H1 (cell line): ENCODE measurements at regions of chr1 and their contacts with region 1.

Region 1: GRCh38 chr1:152869808-152870419 is 8.2 kb upstream of the SMCP start:
- DNase-seq: peak in 1 of 2 experiments; percentile 80
- H3K4me3 ChIP-seq: no peak overlapping the region
- H3K27ac ChIP-seq: no peak overlapping the region
- H3K4me1 ChIP-seq: no peaks in the 10 kb centered on the region; a peak in 1 of 7 replicates
- H3K27me3 ChIP-seq: no peaks in the 10 kb centered on the region
- CTCF ChIP-seq: peak; percentile 78 to 86 (median 81)
- EP300 ChIP-seq: no peak
- POLR2A ChIP-seq: no peak
- RAD21 ChIP-seq: peak; percentile 71 to 74

Region 2: GRCh38 chr1:152836870-152837269 is 33.0 kb before region 1 on chr1:
- CTCF ChIA-PET with region 1: no interaction called
- POLR2A ChIA-PET with region 1: no interaction called
- DNase-seq: no peak
- H3K4me3 ChIP-seq: no peak overlapping the region
- H3K27ac ChIP-seq: no peak overlapping the region
- H3K4me1 ChIP-seq: no peaks in the 10 kb centered on the region
- H3K27me3 ChIP-seq: no peaks in the 10 kb centered on the region
- CTCF ChIP-seq: no peak
- EP300 ChIP-seq: no peak
- POLR2A ChIP-seq: no peak
- RAD21 ChIP-seq: no peak

Region 3: GRCh38 chr1:152906023-152906565 is 36.2 kb after region 1 on chr1:
- CTCF ChIA-PET with region 1: interaction called, 15 read pairs
- POLR2A ChIA-PET with region 1: no interaction called
- DNase-seq: no peak
- H3K4me3 ChIP-seq: no peak overlapping the region
- H3K27ac ChIP-seq: no peak overlapping the region
- H3K4me1 ChIP-seq: no peaks in the 10 kb centered on the region
- H3K27me3 ChIP-seq: no peaks in the 10 kb centered on the region
- CTCF ChIP-seq: no peak
- EP300 ChIP-seq: no peak
- POLR2A ChIP-seq: no peak
- RAD21 ChIP-seq: no peak

Region 4: GRCh38 chr1:152926091-152926490 is 56.2 kb after region 1 on chr1:
- CTCF ChIA-PET with region 1: interaction called, 11 read pairs
- POLR2A ChIA-PET with region 1: no interaction called
- DNase-seq: no peak
- H3K4me3 ChIP-seq: no peak overlapping the region
- H3K27ac ChIP-seq: no peak overlapping the region
- H3K4me1 ChIP-seq: no peaks in the 10 kb centered on the region
- H3K27me3 ChIP-seq: no peaks in the 10 kb centered on the region
- CTCF ChIP-seq: peak; percentile 21 to 76 (median 60)
- EP300 ChIP-seq: no peak
- POLR2A ChIP-seq: no peak
- RAD21 ChIP-seq: peak; percentile 85 to 86

Region 5: GRCh38 chr1:152941021-152941711 is 71.3 kb after region 1 on chr1:
- CTCF ChIA-PET with region 1: no interaction called
- POLR2A ChIA-PET with region 1: no interaction called
- DNase-seq: no peak
- H3K4me3 ChIP-seq: no peak overlapping the region
- H3K27ac ChIP-seq: no peak overlapping the region
- H3K4me1 ChIP-seq: no peaks in the 10 kb centered on the region
- H3K27me3 ChIP-seq: no peaks in the 10 kb centered on the region
- CTCF ChIP-seq: peak in 1 of 3 experiments; percentile 44; a peak in 1 of 4 replicates
- EP300 ChIP-seq: no peak
- POLR2A ChIP-seq: no peak
- RAD21 ChIP-seq: peak in 1 of 2 experiments; percentile 24; a peak in 1 of 4 replicates

Region 6: DNA sequence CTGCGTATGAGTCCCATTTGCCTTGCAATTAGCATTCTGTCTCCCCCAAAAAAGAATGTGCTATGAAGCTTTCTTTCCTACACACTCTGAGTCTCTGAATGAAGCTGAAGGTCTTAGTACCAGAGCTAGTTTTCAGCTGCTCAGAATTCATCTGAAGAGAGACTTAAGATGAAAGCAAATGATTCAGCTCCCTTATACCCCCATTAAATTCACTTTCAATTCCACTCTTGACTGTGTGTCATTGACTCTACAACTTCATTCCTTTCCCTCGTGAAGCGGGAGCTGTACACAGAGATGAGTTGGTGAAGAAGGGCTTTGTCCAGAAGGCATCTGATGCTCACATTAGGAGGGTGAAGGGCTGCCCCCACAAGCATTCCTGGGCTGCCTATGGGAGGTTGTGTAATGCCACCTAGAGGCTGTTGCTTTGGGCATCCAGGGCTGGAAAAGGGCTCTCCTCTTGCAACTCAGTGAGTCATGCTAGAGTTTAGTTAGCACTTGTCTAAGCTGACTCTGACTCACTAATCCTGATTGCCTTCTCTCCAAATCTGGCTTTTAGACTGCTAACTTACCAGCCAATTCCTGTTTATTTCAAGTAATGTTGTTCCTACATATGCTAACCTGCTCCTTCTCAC is 162.9 kb after region 1 on chr1:
- CTCF ChIA-PET with region 1: interaction called, 16 read pairs
- POLR2A ChIA-PET with region 1: no interaction called
- DNase-seq: peak in 1 of 2 experiments; percentile 56
- H3K4me3 ChIP-seq: no peak overlapping the region
- H3K27ac ChIP-seq: no peak overlapping the region; the same call in 1 of the 2 replicates
- H3K4me1 ChIP-seq: no peaks in the 10 kb centered on the region
- H3K27me3 ChIP-seq: peaks cover 0 to 1% (median 0%) of the 10 kb centered on the region in 4 experiments; a peak in 1 of 7 replicates
- CTCF ChIP-seq: peak; percentile 53 to 67 (median 54)
- EP300 ChIP-seq: no peak
- POLR2A ChIP-seq: no peak
- RAD21 ChIP-seq: peak; percentile 61 to 66

Region 7: GRCh38 chr1:153220606-153221303 is 350.8 kb after region 1 on chr1:
- CTCF ChIA-PET with region 1: interaction called, 67 read pairs
- POLR2A ChIA-PET with region 1: no interaction called
- DNase-seq: no peak
- H3K4me3 ChIP-seq: no peak overlapping the region
- H3K27ac ChIP-seq: no peak overlapping the region
- H3K4me1 ChIP-seq: no peaks in the 10 kb centered on the region
- H3K27me3 ChIP-seq: no peaks in the 10 kb centered on the region; a peak in 2 of 7 replicates
- CTCF ChIP-seq: no peak
- EP300 ChIP-seq: no peak
- POLR2A ChIP-seq: no peak
- RAD21 ChIP-seq: no peak

Region 8: DNA sequence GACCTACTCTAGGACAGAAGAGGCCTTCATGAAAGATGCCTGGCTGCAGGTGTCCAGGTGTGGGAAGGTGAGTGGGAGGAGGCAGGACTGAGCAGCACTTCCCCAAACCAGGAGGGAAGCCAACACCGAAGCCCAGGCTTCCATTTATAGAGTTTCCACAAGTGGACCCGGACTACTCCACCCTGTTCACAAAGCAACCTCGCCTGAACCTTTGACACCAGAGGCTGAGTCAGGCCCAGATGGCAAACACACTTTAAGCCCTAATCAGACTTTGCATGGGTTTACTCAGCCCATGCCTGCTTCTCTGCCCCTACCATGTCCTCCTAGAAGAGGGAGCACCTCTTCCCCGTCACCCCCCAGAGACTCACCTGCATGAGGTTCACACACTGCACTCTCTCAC is 361.4 kb after region 1 on chr1:
- CTCF ChIA-PET with region 1: interaction called, 34 read pairs
- POLR2A ChIA-PET with region 1: no interaction called
- DNase-seq: no peak
- H3K4me3 ChIP-seq: no peak overlapping the region
- H3K27ac ChIP-seq: no peak overlapping the region
- H3K4me1 ChIP-seq: no peaks in the 10 kb centered on the region
- H3K27me3 ChIP-seq: no peaks in the 10 kb centered on the region
- CTCF ChIP-seq: no peak
- EP300 ChIP-seq: no peak
- POLR2A ChIP-seq: no peak
- RAD21 ChIP-seq: no peak